MCF 10A (cell line): ENCODE measurements at regions of chr2 and their contacts with region 1.

Region 1: GRCh38 chr2:199739413-199740110 is 111.4 kb downstream of the FTCDNL1 start:
- DNase-seq: peak; percentile 69
- H3K4me3 Mint-ChIP-seq: no peak overlapping the region
- H3K27ac Mint-ChIP-seq: no peak overlapping the region
- H3K4me1 Mint-ChIP-seq: peaks cover 12% of the 10 kb centered on the region
- H3K27me3 Mint-ChIP-seq: peaks cover 44% of the 10 kb centered on the region
- CTCF ChIP-seq: peak; percentile 90

Region 2: GRCh38 chr2:198309673-198310280 is 1429.8 kb before region 1 on chr2:
- CTCF ChIA-PET with region 1: interaction called, 62 read pairs
- POLR2A ChIA-PET with region 1: no interaction called
- intact Hi-C with region 1: loop called (anchors 1 kb)
- DNase-seq: peak; percentile 65
- H3K4me3 Mint-ChIP-seq: no peak overlapping the region
- H3K27ac Mint-ChIP-seq: no peak overlapping the region
- H3K4me1 Mint-ChIP-seq: peaks cover 6% of the 10 kb centered on the region
- H3K27me3 Mint-ChIP-seq: peaks cover 60% of the 10 kb centered on the region
- CTCF ChIP-seq: peak; percentile 71

Region 3: GRCh38 chr2:199488772-199489400 is 250.7 kb before region 1 on chr2:
- CTCF ChIA-PET with region 1: interaction called, 3 read pairs
- POLR2A ChIA-PET with region 1: no interaction called
- intact Hi-C with region 1: loop called (anchors 10 kb)
- DNase-seq: peak; percentile 77
- H3K4me3 Mint-ChIP-seq: no peak overlapping the region
- H3K27ac Mint-ChIP-seq: no peak overlapping the region
- H3K4me1 Mint-ChIP-seq: no peaks in the 10 kb centered on the region
- H3K27me3 Mint-ChIP-seq: peaks cover 20% of the 10 kb centered on the region
- CTCF ChIP-seq: peak; percentile 72

Region 4: GRCh38 chr2:199704358-199705238 is 35.0 kb before region 1 on chr2:
- CTCF ChIA-PET with region 1: interaction called, 141 read pairs
- POLR2A ChIA-PET with region 1: no interaction called
- intact Hi-C with region 1: loop called (anchors 1 kb)
- DNase-seq: peak; percentile 66
- H3K4me3 Mint-ChIP-seq: no peak overlapping the region
- H3K27ac Mint-ChIP-seq: no peak overlapping the region
- H3K4me1 Mint-ChIP-seq: no peaks in the 10 kb centered on the region
- H3K27me3 Mint-ChIP-seq: peaks cover 17% of the 10 kb centered on the region
- CTCF ChIP-seq: peak; percentile 78

Region 5: GRCh38 chr2:199727306-199727705 is 12.3 kb before region 1 on chr2:
- CTCF ChIA-PET with region 1: interaction called, 75 read pairs
- POLR2A ChIA-PET with region 1: no interaction called
- intact Hi-C with region 1: no loop called
- DNase-seq: no peak
- H3K4me3 Mint-ChIP-seq: no peak overlapping the region
- H3K27ac Mint-ChIP-seq: no peak overlapping the region
- H3K4me1 Mint-ChIP-seq: no peaks in the 10 kb centered on the region
- H3K27me3 Mint-ChIP-seq: peaks cover 96% of the 10 kb centered on the region
- CTCF ChIP-seq: no peak

Region 6: DNA sequence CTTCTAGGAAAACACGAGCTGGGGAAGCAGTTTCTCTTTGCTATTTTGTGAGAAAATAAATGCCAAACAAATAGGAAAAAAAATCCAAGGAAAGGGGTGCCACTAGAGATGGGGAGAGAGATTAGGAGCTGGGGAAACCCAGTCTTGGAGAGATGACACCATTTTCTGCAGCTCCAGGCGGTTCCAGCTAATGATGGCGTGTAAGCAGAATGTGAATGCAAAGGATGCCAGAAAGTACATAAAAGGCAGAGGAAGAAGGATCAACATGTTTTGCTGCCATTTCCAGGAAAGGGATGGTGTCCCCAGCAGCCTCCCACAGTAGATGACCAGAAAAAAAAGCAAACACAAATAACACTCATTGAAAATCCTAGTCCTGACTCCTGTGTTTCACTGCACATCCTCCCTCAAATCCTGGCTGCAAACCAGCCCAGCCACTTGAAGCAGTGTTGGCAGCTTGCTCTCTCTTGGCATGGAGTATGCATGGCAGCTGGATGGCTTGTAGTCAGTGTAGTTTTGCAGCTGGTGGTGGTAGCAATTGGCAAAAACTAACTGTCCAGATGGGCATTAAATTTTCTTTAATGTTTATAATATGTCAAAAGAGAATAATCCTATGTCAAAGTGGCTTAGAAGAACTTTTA is 17.8 kb after region 1 on chr2:
- CTCF ChIA-PET with region 1: interaction called, 27 read pairs
- POLR2A ChIA-PET with region 1: interaction called, 5 read pairs
- intact Hi-C with region 1: no loop called
- DNase-seq: peak; percentile 30
- H3K4me3 Mint-ChIP-seq: no peak overlapping the region
- H3K27ac Mint-ChIP-seq: no peak overlapping the region
- H3K4me1 Mint-ChIP-seq: no peaks in the 10 kb centered on the region
- H3K27me3 Mint-ChIP-seq: peaks cover 49% of the 10 kb centered on the region
- CTCF ChIP-seq: no peak

Region 7: DNA sequence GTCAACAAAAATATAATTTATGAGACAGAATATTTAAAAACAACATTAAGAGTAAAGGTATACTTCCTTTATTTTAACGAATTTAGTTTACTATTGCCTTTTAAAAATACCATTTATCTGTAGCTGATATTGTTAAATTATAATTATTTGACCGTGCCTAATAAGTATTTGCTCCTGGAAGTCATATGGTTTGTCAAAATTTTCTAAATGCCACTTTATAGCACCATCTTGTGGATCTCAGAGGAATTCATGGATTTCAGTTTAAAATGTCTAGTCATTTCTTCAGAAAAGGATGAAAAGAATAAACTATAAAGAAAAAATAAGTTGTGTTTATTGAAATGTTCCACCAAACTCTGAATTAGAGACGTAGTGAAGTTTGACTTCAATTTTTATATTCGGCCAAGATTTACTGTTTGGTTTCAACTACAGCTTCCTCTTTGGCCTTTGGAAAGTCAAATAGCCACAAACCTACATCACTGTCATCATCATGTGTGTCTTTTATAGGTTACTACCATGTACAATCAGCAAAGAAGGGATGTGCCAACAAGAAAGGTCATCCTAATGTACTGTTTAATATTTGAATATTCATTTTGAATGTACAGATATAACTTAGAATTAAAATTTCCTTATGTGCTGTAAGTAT is 121.7 kb after region 1 on chr2:
- CTCF ChIA-PET with region 1: interaction called, 18 read pairs
- POLR2A ChIA-PET with region 1: no interaction called
- intact Hi-C with region 1: loop called (anchors 2 kb)
- DNase-seq: peak; percentile 20
- H3K4me3 Mint-ChIP-seq: no peak overlapping the region
- H3K27ac Mint-ChIP-seq: no peak overlapping the region
- H3K4me1 Mint-ChIP-seq: no peaks in the 10 kb centered on the region
- H3K27me3 Mint-ChIP-seq: peaks cover 87% of the 10 kb centered on the region
- CTCF ChIP-seq: peak; percentile 50